CD4-positive, alpha-beta T cell (primary cell): ENCODE measurements at regions of chr4 and their contacts with region 1.

Region 1: DNA sequence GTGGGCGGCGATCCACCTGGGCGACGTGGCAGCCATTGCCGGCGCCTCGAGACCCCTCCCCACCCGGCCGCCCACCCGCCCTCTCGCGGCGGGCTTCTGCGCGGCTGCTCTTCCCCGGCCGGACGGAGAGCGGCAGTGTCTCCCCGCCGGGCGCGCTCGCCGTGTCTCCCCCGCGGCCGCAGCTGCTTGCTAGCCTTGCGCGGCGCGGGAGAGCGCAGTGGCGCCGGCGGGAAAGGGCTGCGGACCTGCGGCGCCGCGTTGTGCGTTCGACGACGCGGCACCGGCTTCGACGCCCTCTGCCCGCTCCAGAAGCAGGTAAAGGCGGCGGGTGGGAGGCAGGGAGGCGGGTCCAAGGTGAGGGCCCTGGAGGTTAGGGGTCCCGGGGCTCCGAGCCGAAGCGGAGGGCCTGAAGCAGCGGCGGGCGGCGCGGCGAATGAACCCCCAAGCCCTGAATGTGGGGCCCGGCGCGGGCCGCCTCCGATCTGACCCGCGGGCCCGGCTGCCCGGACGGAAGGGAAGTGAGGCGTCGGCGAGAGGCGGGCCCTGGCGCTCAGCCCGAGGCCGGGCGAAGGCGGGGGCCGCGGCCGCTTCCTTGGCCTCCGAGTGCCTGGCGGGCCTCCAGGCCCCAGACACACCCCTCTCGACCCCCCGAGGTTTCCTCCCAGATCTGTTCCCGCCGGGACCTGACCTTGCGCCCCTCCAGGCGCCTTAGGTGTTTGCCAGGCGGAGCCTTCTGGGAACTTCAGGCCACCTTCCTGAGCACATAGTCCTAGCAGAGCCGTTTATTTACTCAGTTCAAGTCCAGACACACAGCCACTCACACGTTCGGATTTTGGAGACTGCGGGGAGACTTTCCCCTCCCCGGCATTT is at the start of gene N4BP2:
- DNase-seq: peak; percentile 54 to 91 (median 71)
- ATAC-seq: peak; percentile 66
- H3K4me3 ChIP-seq: peak within 1 kb of the TSS; percentile 96
- H3K4me3 Mint-ChIP-seq: peak within 1 kb of the TSS; percentile 95
- H3K27ac ChIP-seq: peak within 1 kb of the TSS; percentile 83 to 89
- H3K27ac Mint-ChIP-seq: peak within 1 kb of the TSS; percentile 94
- H3K4me1 ChIP-seq: peaks cover 29% of the 10 kb centered on the region
- H3K4me1 Mint-ChIP-seq: peaks cover 40% of the 10 kb centered on the region
- H3K27me3 ChIP-seq: no peaks in the 10 kb centered on the region
- H3K27me3 Mint-ChIP-seq: no peaks in the 10 kb centered on the region
- CTCF ChIP-seq: peak; percentile 77
- total RNA-seq, gene N4BP2: 21.7 to 25.2 TPM

Region 2: DNA sequence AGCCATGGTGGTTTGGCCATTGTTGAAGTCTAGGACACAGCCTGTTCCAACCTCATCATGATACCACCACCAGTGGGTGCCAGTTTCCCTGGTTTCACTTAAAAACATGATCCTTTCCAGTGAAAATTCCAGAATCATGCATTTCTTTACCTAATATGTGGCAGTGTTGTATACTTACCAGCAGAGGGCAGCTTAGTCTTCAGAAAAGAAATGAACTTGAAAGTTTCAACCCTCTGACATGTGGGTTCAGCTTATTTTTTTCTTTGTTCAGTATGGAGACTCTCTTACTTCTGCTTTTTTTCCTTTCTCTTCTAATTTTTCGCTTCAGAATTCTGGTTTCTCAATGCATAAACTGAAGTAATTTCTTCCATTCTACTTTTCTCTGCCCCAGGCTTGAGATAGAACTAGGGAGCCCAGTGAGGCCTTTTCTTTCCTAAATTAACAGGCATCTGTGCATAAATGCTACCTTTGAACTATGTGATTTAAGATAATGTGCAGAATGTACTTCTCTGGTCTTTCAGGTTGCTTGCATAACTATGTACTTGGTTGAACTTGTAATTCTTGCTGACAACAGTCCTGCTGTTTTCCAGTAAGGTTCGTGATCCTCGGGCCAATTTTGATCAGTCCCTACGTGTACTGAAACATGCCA is 587.4 kb before region 1 on chr4:
- CTCF ChIA-PET with region 1: no interaction called
- POLR2A ChIA-PET with region 1: no interaction called
- intact Hi-C with region 1: loop called in 1 of 2 experiments (anchors 10 kb)
- DNase-seq: peak in 4 of 14 experiments; percentile 11 to 72 (median 65)
- ATAC-seq: peak; percentile 94
- H3K4me3 ChIP-seq: no peak overlapping the region
- H3K4me3 Mint-ChIP-seq: no peak overlapping the region
- H3K27ac ChIP-seq: no peak overlapping the region
- H3K27ac Mint-ChIP-seq: no peak overlapping the region
- H3K4me1 ChIP-seq: no peaks in the 10 kb centered on the region
- H3K4me1 Mint-ChIP-seq: peaks cover 7% of the 10 kb centered on the region
- H3K27me3 ChIP-seq: no peaks in the 10 kb centered on the region
- H3K27me3 Mint-ChIP-seq: no peaks in the 10 kb centered on the region
- CTCF ChIP-seq: peak; percentile 92

Region 3: DNA sequence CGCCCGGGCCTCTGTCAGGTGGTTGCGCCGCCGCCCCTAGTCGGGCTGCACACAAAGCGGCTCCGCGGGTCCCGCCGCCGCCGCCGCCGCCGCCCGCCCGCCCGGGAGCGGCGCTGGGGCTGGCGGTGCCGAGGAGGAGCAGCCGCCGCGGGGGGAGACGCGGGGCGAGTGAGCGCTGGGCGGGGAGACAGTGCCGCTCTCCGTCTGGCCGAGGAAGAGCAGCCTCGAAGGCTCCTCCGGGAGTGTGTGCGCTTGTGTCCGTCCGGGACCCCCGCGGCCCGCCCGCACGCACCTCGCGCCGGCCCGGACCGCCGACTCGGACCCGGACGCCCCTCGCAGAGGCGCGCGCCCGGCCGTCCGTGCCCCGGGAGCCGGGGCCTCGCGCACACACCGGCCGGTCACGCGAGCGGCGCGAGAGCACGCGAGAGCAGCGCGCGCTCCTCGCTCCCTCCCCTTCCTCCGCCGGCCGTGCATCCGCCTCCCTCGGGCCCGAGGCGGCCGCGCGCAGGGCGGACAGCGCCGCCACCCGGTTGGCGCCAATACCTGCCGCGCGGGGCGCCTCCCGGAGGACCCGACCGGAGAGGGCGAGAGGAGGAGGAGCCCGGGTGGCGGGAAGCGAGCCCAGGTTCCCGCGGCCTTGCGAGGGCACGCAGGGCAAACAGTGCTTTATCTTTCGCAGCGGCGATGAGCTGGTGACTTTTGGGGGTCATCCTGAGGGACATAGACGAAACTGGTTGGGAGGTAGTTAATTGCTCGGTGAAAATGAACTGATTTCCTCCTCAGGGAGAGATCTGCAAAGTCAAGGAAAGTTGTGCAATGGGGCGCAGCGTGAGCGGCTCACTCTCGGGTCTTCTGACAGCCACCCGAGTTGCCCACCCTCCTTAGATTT is 79.2 kb before region 1 on chr4 and contains the start of gene PDS5A:
- CTCF ChIA-PET with region 1: interaction called, 6 read pairs
- POLR2A ChIA-PET with region 1: interaction called, 3 read pairs
- intact Hi-C with region 1: loop called in 1 of 2 experiments (anchors 5 kb)
- DNase-seq: peak; percentile 76 to 96 (median 86)
- ATAC-seq: peak; percentile 85
- H3K4me3 ChIP-seq: peak within 1 kb of the TSS; percentile 90
- H3K4me3 Mint-ChIP-seq: peak within 1 kb of the TSS; percentile 86
- H3K27ac ChIP-seq: peak within 1 kb of the TSS; percentile 78 to 92
- H3K27ac Mint-ChIP-seq: peak within 1 kb of the TSS; percentile 93
- H3K4me1 ChIP-seq: peaks cover 36% of the 10 kb centered on the region
- H3K4me1 Mint-ChIP-seq: peaks cover 34% of the 10 kb centered on the region
- H3K27me3 ChIP-seq: no peaks in the 10 kb centered on the region
- H3K27me3 Mint-ChIP-seq: no peaks in the 10 kb centered on the region
- CTCF ChIP-seq: peak; percentile 73
- total RNA-seq, gene PDS5A: 80.0 to 80.6 TPM

Region 4: GRCh38 chr4:40149960-40150385 is 93.0 kb after region 1 on chr4:
- CTCF ChIA-PET with region 1: interaction called, 9 read pairs
- POLR2A ChIA-PET with region 1: interaction called, 8 read pairs
- intact Hi-C with region 1: loop called (anchors 2 to 5 kb)
- DNase-seq: peak; percentile 51 to 89 (median 61)
- ATAC-seq: peak; percentile 88
- H3K4me3 ChIP-seq: no peak overlapping the region
- H3K4me3 Mint-ChIP-seq: no peak overlapping the region
- H3K27ac ChIP-seq: no peak overlapping the region
- H3K27ac Mint-ChIP-seq: peak overlapping the region; percentile 66
- H3K4me1 ChIP-seq: peaks cover 2% of the 10 kb centered on the region
- H3K4me1 Mint-ChIP-seq: peaks cover 45% of the 10 kb centered on the region
- H3K27me3 ChIP-seq: no peaks in the 10 kb centered on the region
- H3K27me3 Mint-ChIP-seq: no peaks in the 10 kb centered on the region
- CTCF ChIP-seq: peak; percentile 89

Region 5: DNA sequence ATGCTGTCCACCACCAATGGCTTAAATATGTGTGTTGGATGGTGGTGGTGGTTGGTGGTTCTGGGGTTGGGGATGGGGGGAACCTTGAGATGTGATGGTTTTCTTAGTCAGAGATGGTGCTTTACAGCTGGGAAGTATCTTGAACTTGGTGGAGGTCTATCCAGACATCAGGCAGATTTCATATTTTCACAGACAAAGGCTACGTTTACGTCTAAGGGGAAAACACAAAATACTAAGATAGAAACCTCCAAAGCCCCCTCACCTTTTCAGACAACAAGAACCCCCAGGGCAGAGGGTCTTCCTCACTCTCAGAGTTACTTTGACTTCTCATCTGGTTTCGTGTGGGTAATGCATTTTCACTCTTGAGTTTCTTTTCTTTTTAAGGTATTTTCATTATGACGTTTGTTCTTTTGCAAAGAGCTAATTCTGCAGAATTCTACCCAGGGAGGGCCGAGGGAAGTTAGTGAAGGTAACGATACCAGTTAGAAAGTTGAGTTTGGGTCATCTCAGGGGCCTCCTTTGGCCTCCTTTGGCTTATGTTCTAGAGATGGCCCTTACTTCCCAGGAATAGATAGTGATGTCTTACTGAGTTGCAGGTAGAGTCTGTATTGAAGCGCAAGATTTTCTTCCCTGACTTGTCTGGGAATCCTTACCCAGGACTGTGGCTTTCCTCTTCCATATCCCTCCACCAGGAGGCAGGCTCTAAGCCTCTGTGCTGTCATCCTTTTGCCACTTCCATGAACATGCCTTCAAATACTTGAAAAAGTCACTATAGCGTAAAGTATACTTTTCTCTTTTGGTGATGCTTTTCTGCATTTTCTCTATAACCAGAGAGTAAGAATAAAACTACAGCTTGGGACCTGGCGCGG is 171.8 kb after region 1 on chr4:
- CTCF ChIA-PET with region 1: interaction called, 5 read pairs
- POLR2A ChIA-PET with region 1: interaction called, 7 read pairs
- intact Hi-C with region 1: loop called in 1 of 2 experiments (anchors 10 kb)
- DNase-seq: peak in 1 of 14 experiments; percentile 52
- ATAC-seq: no peak
- H3K4me3 ChIP-seq: peak overlapping the region; percentile 8
- H3K4me3 Mint-ChIP-seq: peak overlapping the region; percentile 49
- H3K27ac ChIP-seq: peak overlapping the region; percentile 70 to 82
- H3K27ac Mint-ChIP-seq: peak overlapping the region; percentile 93
- H3K4me1 ChIP-seq: peaks cover 86% of the 10 kb centered on the region
- H3K4me1 Mint-ChIP-seq: peaks cover 91% of the 10 kb centered on the region
- H3K27me3 ChIP-seq: no peaks in the 10 kb centered on the region
- H3K27me3 Mint-ChIP-seq: no peaks in the 10 kb centered on the region
- CTCF ChIP-seq: peak; percentile 37

Region 6: DNA sequence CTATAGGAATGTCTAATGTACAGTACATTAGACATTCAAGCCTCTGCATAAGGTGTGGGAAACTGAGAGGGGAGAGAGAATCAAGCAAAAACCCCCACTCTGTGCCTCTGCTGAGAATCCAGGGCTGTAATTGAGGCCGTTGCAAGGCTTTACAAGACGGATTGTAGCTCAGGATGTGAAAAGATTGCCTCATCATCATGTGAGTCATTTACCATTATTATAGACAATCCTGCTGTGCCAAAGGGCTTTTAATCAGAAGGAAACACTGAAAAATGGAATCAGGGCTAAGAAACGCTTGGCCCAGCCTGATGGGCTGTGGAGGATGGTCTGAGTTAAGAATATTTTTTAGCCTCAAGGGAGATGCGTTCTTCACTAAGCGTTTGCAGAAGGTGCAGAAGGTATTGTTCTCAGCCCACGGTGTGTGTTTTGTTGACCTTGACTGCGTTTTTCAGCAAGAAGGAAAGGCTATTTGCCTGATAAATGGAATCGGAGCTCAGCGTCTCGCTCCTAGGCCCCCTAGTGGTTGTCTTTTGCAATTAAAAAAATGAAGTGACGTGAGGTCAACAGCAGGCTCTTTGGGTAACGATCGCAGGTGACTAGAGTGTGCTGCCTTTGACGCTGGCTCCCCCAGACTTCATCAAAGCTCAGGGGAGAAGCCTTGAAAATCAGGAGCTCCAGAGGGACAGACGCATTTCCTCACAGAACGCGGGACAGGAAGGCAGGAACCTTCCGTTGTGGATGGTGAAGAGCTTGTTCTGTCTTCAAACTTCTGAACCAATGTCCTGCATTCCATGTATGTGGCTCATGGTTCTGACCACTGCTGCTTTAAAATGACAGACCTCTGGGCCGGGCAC is 260.1 kb after region 1 on chr4:
- CTCF ChIA-PET with region 1: interaction called, 9 read pairs
- POLR2A ChIA-PET with region 1: interaction called, 13 read pairs
- intact Hi-C with region 1: no loop called
- DNase-seq: peak in 13 of 14 experiments; percentile 34 to 88 (median 54)
- ATAC-seq: peak; percentile 67
- H3K4me3 ChIP-seq: peak overlapping the region; percentile 54
- H3K4me3 Mint-ChIP-seq: peak overlapping the region; percentile 83
- H3K27ac ChIP-seq: peak overlapping the region; percentile 69 to 80
- H3K27ac Mint-ChIP-seq: peak overlapping the region; percentile 91
- H3K4me1 ChIP-seq: peaks cover 20% of the 10 kb centered on the region
- H3K4me1 Mint-ChIP-seq: peaks cover 57% of the 10 kb centered on the region
- H3K27me3 ChIP-seq: no peaks in the 10 kb centered on the region
- H3K27me3 Mint-ChIP-seq: no peaks in the 10 kb centered on the region
- CTCF ChIP-seq: peak; percentile 86

Region 7: DNA sequence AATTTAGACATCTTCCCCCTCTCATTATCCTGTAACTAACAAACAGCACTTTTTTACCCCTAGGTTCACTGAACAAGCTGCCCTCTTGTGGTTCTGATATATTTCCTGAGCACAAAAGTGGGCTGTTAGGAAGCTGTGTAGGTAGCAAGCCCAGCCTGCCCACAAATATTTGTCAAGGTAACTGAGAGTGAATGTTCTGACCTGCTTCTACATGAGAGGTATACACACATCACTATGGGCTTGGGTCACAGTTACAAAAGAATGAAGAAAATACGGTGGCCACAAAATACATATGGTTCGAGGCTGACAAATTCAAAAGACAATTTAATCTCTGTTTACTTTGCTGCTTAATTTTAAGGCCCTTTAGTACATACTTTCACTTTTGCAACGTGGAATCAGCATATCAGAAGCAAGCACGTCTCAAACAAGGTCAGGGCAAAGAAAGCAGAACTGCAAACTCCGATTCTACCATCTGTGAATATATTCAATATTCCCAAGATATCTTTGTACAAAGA is 494.1 kb after region 1 on chr4:
- CTCF ChIA-PET with region 1: no interaction called
- POLR2A ChIA-PET with region 1: interaction called, 6 read pairs
- intact Hi-C with region 1: loop called (anchors 2 to 10 kb)
- DNase-seq: peak in 10 of 14 experiments; percentile 1 to 65 (median 8)
- ATAC-seq: peak; percentile 88
- H3K4me3 ChIP-seq: peak overlapping the region; percentile 30
- H3K4me3 Mint-ChIP-seq: peak overlapping the region; percentile 87
- H3K27ac ChIP-seq: peak overlapping the region; percentile 16 to 40
- H3K27ac Mint-ChIP-seq: peak overlapping the region; percentile 87
- H3K4me1 ChIP-seq: peaks cover 11% of the 10 kb centered on the region
- H3K4me1 Mint-ChIP-seq: peaks cover 12% of the 10 kb centered on the region
- H3K27me3 ChIP-seq: no peaks in the 10 kb centered on the region
- H3K27me3 Mint-ChIP-seq: no peaks in the 10 kb centered on the region
- CTCF ChIP-seq: peak; percentile 33